ENCODE measurements at regions of chr11 and their contacts with region 1.

Region 1: DNA sequence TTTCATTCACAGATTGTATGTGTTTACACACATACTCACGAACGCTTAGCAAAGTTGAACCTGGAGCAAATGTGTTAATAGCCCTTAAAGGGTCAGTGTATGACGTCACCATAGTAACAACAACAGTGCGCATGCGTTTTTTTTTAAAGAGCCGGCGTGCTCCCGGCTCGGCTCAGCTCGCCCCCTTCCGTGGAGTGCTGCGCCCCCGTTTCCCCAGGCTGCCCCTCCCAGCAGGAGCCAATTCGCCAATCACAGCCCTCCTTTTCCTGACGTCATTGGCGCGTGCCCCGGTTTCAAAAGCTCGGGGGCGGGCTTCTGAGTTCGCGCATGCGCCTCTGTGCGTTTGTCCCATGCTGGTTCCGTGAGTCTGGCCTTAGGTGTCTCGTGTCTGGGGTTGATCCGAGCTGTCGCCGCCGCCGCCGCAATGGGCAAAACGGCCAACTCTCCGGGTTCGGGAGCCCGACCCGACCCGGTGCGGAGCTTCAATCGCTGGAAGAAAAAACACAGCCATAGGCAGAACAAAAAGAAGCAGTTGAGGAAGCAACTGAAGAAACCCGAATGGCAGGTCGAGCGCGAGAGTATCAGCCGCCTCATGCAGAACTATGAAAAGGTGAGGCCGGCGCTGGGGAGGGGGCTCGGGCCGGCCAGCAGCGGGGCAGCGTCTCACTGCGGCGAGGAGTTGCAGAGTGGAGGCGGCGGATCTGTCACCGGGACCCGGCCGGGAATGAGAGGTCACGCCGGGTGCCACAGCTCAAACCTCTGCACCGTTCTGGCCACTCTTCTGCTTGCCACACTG is at the start of gene DDX10:
- DNase-seq: peak; percentile 94
- CTCF ChIP-seq: peak; percentile 9

Region 2: DNA sequence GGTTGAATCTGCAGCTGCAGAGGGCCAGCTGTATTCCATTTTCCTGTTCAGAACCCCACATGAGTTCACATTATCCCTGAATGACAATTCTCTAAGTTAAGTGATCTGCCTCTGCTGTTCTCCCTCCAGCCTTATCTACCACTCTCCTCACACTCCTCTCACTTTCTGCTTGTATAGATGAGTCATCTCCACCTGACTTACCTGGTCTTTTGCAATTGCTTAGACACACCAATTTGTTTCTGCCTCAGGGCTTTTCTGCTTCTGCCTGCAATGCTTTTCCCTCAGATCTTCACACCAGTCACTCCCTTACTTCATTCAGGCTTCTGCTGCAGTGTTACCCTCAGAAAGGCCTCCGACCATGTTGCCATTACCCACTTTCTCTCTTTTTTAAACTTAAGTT is 324.0 kb before region 1 on chr11:
- in situ Hi-C with region 1: loop called (anchors 25 kb)
- DNase-seq: no peak
- CTCF ChIP-seq: no peak

Region 3: GRCh38 chr11:108432783-108433182 is 232.1 kb before region 1 on chr11:
- in situ Hi-C with region 1: no loop called
- DNase-seq: no peak
- CTCF ChIP-seq: no peak

Measured in GM13977 (cell line).